Posterior cingulate gyrus (tissue), 11 donors: ENCODE measurements at regions of chr11 and their contacts with region 1.

Region 1: GRCh38 chr11:126194121-126194543 is 17.3 kb downstream of the RPUSD4 start:
- DNase-seq: peak in 4 of 10 donors; percentile 35 to 59 (median 45)

Region 2: DNA sequence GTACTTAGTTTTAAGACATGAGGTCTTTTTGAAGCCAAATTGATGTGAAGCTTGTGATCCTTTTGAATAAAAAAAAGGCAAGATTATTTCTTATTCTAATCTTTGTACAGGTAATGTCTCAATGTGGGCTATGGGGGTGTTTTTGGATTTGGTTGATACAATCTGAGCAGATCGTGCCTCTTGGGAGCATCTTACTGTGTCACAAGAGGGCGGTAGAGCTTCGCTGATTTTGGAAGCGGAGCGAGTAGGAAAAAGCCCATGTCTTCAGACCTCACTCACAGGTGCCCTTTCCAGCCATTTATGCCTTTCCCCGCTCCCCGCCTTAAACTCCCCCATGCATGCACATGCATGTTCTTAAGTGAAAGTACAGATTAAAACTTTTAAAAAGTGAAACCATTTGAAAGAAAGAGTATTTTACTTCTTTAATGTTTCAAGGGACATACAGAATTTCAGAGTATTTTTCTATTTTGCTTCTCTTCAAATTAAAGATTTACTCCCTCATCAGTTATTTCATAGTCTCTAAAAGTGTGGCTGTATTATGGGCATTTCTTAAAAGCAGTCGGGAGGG is 271.0 kb before region 1 on chr11:
- intact Hi-C with region 1: loop called (anchors 1 kb)
- DNase-seq: peak in 9 of 10 donors; percentile 35 to 93 (median 68)

Region 3: DNA sequence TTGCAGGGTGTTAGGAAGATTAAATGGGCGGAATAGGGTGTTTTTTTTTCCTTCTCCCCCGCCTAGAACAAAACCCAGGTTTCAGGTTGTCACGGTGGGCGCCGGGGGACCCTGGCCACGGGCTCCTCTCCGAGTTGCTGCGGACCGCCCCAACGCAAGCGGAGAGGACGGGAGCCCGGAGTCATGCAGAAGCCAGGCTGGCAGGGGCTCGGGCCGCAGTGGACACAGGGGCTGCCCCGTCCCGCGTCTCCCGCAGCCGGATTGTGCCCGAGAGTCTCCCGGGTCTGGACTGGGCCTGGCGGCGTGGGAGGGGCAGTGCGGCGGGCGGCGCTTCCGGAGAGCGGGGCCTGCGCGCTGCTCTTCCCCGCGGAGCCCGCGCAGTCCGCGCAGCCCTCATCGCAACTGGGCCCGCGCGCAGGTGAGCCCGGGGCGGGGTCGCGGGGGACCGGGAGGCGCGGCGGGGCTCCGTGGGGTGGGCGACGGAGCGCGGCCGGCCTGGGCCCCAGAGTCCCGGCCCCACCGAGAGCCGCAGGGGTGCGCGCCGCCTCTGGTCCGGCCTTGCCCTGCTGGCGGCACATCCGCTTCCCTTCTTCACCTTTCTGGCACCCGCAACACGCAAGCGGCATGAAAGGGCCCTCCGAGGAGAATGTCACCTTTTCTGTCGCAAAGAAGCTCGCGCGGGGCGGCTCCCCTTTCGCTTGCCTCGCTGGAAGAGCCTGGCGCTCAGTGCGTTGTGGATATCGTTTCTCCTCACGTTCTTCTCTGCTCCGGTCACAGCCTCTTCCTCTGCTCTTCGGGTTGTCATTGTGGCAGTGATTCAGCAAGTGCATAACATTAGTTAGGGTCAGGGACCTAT is 88.8 kb after region 1 on chr11 and contains the start of gene TIRAP:
- intact Hi-C with region 1: no loop called
- DNase-seq: peak; percentile 44 to 95 (median 68)

Region 4: GRCh38 chr11:126426820-126427749 is 233.0 kb after region 1 on chr11:
- intact Hi-C with region 1: no loop called
- DNase-seq: peak in 3 of 10 donors; percentile 39 to 85 (median 55)